IMR-90 (cell line): ENCODE measurements at regions of chr16 and their contacts with region 1.

Region 1: DNA sequence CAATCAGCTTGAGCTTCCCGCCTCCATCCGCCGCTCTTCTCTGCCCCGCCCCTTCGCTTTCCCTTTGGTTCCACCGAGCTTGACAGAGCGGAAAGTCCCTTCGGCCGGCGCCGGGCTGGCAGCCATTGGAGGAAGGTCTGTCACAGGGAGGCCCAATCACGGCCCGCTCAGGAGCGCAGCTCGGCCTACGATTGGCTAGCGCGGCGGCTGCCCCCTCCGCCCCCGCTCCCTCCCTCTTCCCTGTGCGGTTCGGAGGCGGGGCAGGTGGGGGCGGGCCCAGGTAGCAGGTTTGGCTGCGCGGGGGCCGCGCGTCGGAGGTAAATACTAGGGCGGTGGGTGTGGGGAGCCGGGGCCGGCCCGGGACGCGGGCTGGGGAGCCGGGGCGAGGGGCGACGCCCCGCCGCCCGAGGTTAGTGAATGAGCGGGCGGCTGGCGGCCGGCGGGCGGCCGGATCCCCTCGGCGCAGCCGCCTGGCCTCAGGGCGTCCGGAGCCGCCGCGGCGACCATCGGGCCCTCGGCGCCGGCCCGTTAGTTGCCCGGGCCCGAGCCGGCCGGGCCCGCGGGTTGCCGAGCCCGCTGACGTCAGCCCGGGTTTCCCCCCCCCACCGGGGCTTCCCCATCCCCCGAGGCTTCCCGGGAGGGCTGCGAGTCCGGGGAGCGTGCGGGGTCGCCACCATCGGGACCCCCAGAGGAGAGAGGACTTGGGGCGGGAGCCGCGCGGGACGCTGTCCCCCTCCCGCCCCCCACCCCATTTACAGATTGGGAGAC is at the start of gene CYLD:
- DNase-seq: peak; percentile 99
- ATAC-seq: peak; percentile 97
- H3K4me3 ChIP-seq: peak within 1 kb of the TSS; percentile 98
- H3K27ac ChIP-seq: peak within 1 kb of the TSS; percentile 67
- H3K4me1 ChIP-seq: peaks cover 9% of the 10 kb centered on the region
- H3K27me3 ChIP-seq: peaks cover 8% of the 10 kb centered on the region
- CTCF ChIP-seq: no peak
- POLR2A ChIP-seq: no peak; the same call in 1 of the 2 replicates
- RAD21 ChIP-seq: no peak
- total RNA-seq, gene CYLD: 37.3 and 50.8 TPM in 2 replicates

Region 2: GRCh38 chr16:50152807-50153452 is 589.1 kb before region 1 on chr16 and contains the start of gene TENT4B:
- CTCF ChIA-PET with region 1: no interaction called
- POLR2A ChIA-PET with region 1: no interaction called
- dilution Hi-C with region 1: no loop called
- in situ Hi-C with region 1: no loop called
- intact Hi-C with region 1: loop called (anchors 10 kb)
- DNase-seq: peak; percentile 66
- ATAC-seq: peak; percentile 90
- H3K4me3 ChIP-seq: peak within 1 kb of the TSS; percentile 97
- H3K27ac ChIP-seq: peak within 1 kb of the TSS; percentile 98
- H3K4me1 ChIP-seq: peaks cover 5% of the 10 kb centered on the region
- H3K27me3 ChIP-seq: no peaks in the 10 kb centered on the region
- CTCF ChIP-seq: no peak
- POLR2A ChIP-seq: peak; percentile 85
- RAD21 ChIP-seq: no peak
- total RNA-seq, gene TENT4B: 7.0 and 12.5 TPM in 2 replicates

Region 3: GRCh38 chr16:50228364-50228868 is 513.6 kb before region 1 on chr16:
- CTCF ChIA-PET with region 1: no interaction called
- POLR2A ChIA-PET with region 1: no interaction called
- dilution Hi-C with region 1: no loop called
- in situ Hi-C with region 1: no loop called
- intact Hi-C with region 1: loop called (anchors 10 kb)
- DNase-seq: no peak
- ATAC-seq: no peak
- H3K4me3 ChIP-seq: no peak overlapping the region
- H3K27ac ChIP-seq: no peak overlapping the region
- H3K4me1 ChIP-seq: peaks cover 9% of the 10 kb centered on the region
- H3K27me3 ChIP-seq: no peaks in the 10 kb centered on the region
- CTCF ChIP-seq: no peak
- POLR2A ChIP-seq: no peak
- RAD21 ChIP-seq: no peak

Region 4: GRCh38 chr16:50335196-50335958 is 406.6 kb before region 1 on chr16:
- CTCF ChIA-PET with region 1: no interaction called
- POLR2A ChIA-PET with region 1: no interaction called
- dilution Hi-C with region 1: no loop called
- in situ Hi-C with region 1: no loop called
- intact Hi-C with region 1: loop called (anchors 10 kb)
- DNase-seq: peak; percentile 33
- ATAC-seq: peak; percentile 33; the same call in 1 of the 2 replicates
- H3K4me3 ChIP-seq: no peak overlapping the region
- H3K27ac ChIP-seq: peak overlapping the region; percentile 28; the same call in 1 of the 2 replicates
- H3K4me1 ChIP-seq: peaks cover 10% of the 10 kb centered on the region
- H3K27me3 ChIP-seq: no peaks in the 10 kb centered on the region
- CTCF ChIP-seq: no peak
- POLR2A ChIP-seq: no peak
- RAD21 ChIP-seq: no peak

Region 5: DNA sequence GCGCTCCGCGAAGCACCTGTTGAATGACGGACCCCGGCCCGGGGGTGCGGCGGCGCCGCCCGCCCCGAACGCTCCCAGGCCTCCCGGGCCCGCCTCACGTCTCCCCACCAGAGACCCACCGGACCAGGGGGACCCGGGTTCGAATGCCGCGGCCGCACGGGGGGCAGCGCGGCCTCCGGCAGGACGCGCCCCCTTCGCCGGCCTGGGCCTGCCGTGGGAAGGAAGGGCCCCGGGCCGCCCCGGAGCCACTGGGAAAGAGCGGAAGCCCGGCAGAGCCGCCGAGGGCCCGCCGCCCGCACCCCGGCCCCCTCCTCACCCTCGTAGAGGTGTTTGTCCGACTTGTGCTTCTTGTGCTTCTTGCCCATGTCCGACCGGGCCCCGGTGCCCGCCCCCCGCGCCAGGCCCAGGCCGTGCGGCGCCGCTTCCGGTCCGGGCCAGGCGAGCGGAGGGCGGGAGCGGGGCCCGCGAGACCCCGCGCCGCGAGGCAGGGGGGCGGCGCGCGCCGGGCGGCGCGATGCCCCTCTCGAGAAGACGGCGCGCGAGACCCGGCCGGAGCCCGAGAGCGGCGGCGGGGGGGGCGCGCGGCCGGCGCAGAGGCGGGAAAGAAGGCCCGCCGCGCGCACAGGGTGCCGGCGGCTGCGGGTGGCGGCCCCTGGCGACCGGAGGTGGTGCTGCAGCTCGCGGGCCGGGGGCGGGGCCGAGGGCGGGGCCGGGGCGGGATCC is 373.4 kb before region 1 on chr16 and contains the start of gene BRD7:
- CTCF ChIA-PET with region 1: no interaction called
- POLR2A ChIA-PET with region 1: no interaction called
- dilution Hi-C with region 1: no loop called
- in situ Hi-C with region 1: no loop called
- intact Hi-C with region 1: loop called (anchors 1 kb)
- DNase-seq: peak; percentile 37
- ATAC-seq: peak; percentile 96
- H3K4me3 ChIP-seq: peak within 1 kb of the TSS; percentile 88
- H3K27ac ChIP-seq: peak within 1 kb of the TSS; percentile 33; the same call in 1 of the 2 replicates
- H3K4me1 ChIP-seq: peaks cover 2% of the 10 kb centered on the region; the same call in 1 of the 2 replicates
- H3K27me3 ChIP-seq: peaks cover 10% of the 10 kb centered on the region
- CTCF ChIP-seq: peak; percentile 56
- POLR2A ChIP-seq: no peak
- RAD21 ChIP-seq: peak; percentile 29
- total RNA-seq, gene BRD7: 29.9 and 38.9 TPM in 2 replicates

Region 6: DNA sequence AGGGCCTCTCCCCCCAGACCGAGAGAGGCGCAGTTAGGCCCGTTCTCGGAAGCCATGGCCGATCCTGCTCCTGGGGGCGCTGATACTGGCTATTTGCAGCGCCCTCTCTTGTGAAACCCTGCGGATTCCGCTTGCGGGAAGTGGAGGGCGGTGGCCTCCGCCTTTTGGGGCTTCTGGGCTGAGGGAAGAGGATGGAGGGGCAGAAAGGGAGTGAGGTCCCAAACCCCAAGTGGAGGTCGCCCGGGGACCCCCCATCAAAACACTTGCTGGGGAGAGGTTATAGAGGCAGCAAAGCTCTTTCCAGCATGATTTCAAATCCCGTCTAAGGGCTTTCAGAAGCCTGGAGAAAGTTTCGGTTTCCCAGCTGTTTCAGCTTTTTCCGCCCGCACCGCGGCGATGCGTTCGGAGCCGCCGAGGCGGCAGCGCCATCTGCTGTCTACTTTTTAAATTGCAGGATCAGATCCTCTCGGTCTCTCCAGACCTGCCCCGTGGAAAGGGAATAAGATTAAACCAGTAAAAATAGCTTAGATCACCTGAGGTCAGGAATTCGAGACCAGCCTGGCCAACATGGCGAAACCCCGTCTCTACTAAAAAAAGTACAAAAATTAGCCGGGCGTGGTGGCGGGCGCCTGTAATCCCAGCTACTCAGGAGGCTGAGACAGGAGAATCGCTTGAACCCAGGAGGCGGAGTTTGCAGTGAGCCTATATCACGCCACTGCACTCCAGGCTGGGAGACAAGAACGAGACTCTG is 76.7 kb before region 1 on chr16:
- CTCF ChIA-PET with region 1: no interaction called
- POLR2A ChIA-PET with region 1: no interaction called
- dilution Hi-C with region 1: no loop called
- in situ Hi-C with region 1: no loop called
- intact Hi-C with region 1: loop called (anchors 2 kb)
- DNase-seq: peak; percentile 57
- ATAC-seq: peak; percentile 98
- H3K4me3 ChIP-seq: peak overlapping the region; percentile 47
- H3K27ac ChIP-seq: no peak overlapping the region
- H3K4me1 ChIP-seq: no peaks in the 10 kb centered on the region
- H3K27me3 ChIP-seq: no peaks in the 10 kb centered on the region; the same call in 1 of the 2 replicates
- CTCF ChIP-seq: peak; percentile 94
- POLR2A ChIP-seq: no peak
- RAD21 ChIP-seq: peak; percentile 83

Region 7: GRCh38 chr16:50692999-50693781 is 48.8 kb before region 1 on chr16 and contains the start of gene NOD2:
- CTCF ChIA-PET with region 1: no interaction called
- POLR2A ChIA-PET with region 1: no interaction called
- dilution Hi-C with region 1: no loop called
- in situ Hi-C with region 1: no loop called
- intact Hi-C with region 1: no loop called
- DNase-seq: no peak
- ATAC-seq: peak; percentile 60
- H3K4me3 ChIP-seq: no peak within 1 kb of the TSS
- H3K27ac ChIP-seq: no peak within 1 kb of the TSS
- H3K4me1 ChIP-seq: no peaks in the 10 kb centered on the region
- H3K27me3 ChIP-seq: peaks cover 18% of the 10 kb centered on the region; the same call in 1 of the 2 replicates
- CTCF ChIP-seq: no peak
- POLR2A ChIP-seq: no peak
- RAD21 ChIP-seq: no peak
- total RNA-seq, gene NOD2: not detected in 2 replicates

Region 8: DNA sequence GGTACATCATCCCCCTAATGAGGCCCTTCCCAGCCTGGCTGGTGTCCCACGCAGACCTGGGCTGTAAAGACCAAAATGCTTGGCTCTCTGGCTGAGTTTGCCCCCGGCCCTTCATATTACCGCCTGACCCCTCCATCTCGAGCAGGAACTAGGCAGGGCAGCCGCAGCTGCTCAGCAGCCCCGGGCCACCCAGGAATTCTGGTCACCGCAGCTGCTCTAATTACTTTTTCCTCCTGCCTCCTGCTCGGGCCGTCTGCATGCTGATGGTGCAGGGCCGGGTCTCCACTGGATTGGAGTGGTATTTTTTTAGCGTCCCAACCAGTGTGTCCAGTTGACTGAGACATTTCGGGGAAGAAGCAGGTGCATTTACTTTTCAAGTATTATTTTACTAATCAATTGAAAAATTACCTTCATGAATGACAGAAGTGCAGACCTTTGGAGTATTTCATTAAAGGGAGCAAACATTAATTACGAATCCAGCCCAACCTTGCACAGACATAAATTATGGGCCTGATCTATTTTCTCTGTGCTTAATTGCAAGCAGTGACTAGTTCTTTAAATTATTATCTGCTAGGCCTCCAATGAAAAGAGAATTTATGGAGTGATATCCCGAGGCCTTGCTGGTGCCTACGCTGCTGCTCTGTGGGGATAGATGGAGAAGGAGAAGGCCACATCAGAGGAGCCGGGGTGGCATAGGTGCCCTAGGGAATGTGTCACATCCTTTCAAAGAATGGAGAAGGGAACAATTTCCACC is 176.1 kb after region 1 on chr16:
- CTCF ChIA-PET with region 1: no interaction called
- POLR2A ChIA-PET with region 1: no interaction called
- dilution Hi-C with region 1: no loop called
- in situ Hi-C with region 1: no loop called
- intact Hi-C with region 1: no loop called
- DNase-seq: no peak
- ATAC-seq: no peak
- H3K4me3 ChIP-seq: no peak overlapping the region
- H3K27ac ChIP-seq: no peak overlapping the region
- H3K4me1 ChIP-seq: no peaks in the 10 kb centered on the region
- H3K27me3 ChIP-seq: no peaks in the 10 kb centered on the region
- CTCF ChIP-seq: no peak
- POLR2A ChIP-seq: no peak
- RAD21 ChIP-seq: no peak